ENCODE measurements at regions of chr10 and their contacts with region 1.

Region 1: DNA sequence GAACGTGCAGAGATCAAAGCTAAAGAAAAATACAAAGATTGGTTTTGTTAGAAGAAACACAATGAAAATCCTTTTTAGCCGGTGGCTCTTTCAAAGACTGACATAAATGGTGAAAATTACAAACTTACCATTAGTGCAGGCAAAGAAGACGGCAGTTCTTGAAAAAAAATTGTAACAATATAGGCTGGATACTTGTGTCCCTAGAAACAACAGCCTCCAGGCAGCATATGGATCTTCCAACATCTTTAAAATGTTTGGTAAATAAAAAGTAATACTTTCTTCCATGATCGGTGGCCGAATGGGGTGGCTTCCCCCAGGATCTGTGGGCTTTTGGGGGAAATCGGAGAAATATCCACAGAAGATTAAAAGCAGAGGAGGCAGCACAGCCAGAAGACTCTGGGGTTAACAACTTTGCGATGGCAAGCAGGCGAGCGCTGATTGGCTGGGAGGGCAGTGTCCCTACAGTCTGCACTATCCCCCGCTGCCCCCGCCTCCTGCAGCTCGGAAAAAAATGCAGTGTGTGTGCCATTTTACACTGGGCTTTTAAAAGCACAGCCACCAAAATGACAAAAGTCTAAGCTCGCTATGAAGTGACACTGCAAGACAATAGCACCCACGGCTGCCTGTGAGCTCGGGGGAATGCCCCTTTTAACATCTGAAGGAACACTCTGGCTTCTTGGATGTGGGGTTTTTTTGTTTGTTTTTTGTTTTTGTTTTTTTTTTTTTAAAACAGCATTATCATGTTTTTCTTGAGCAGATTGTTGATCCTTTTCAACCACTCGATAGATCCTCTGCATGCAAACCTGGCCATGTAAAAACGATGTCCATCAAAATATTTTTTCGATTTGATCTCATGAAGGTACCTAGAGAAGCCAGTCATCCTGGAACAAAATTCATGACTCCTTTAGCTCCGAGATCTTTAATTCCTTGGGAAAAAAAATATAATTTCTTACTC is 31.7 kb upstream of the EPC1 start:
- DNase-seq: peak; percentile 84
- ATAC-seq: peak; percentile 98
- H3K4me3 ChIP-seq: peak overlapping the region; percentile 64 to 94 (median 76)
- H3K27ac ChIP-seq: peak overlapping the region; percentile 79
- H3K4me1 ChIP-seq: peaks cover 38% of the 10 kb centered on the region
- H3K27me3 ChIP-seq: no peaks in the 10 kb centered on the region; a peak in 1 of 5 replicates
- CTCF ChIP-seq: 0 out of 2 replicates have a peak, but pooled peaks have one; percentile 8
- EP300 ChIP-seq: no peak
- POLR2A ChIP-seq: peak in 1 of 2 experiments; percentile 35; a peak in 2 of 4 replicates
- RAD21 ChIP-seq: no peak

Region 2: DNA sequence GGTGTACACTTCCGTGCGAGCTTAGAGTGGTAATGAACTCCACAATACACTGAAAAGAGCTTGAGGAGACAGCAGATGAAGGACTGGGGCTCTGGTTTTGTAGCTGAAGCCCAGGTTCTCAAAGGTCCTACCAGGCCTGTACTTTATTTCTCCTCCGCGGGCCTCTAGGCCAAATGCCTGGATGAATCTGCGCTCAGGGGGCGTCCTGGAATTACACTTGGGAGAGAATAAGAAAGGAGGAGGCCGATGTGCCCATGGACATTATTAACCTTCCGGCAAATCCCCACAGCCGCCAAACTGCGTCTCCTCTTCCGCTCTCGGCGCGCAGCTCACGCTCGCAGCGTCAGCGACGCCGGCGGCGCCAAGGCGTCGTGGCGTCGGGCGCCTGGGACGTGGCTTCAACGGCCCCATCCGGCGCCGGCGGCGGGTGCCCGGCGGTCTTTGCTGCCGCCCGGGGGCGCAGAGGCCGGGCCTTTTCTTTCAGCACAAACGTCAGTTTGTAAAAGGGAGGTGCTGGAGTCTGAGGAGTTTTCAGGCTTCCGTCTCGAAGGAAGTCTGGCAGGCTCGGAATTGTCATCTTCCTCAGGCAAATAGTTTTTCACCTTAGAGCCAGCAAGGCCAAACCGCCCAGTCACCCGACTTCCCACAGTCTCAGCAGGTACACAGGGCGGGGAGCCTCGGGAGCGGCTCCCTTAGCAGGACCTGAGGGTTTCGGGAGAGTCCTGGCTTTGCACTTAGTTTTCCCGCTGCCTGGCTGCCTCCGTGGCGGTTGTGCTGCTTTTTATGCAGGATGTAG is 67.3 kb after region 1 on chr10 and contains the start of gene CCDC7:
- CTCF ChIA-PET with region 1: no interaction called
- POLR2A ChIA-PET with region 1: no interaction called
- in situ Hi-C with region 1: no loop called
- intact Hi-C with region 1: loop called (anchors 5 kb)
- DNase-seq: peak; percentile 62
- ATAC-seq: peak; percentile 99
- H3K4me3 ChIP-seq: peak within 1 kb of the TSS; percentile 62 to 77 (median 76)
- H3K27ac ChIP-seq: peak within 1 kb of the TSS; percentile 49
- H3K4me1 ChIP-seq: peaks cover 10% of the 10 kb centered on the region
- H3K27me3 ChIP-seq: no peaks in the 10 kb centered on the region; a peak in 1 of 5 replicates
- CTCF ChIP-seq: peak; percentile 53
- EP300 ChIP-seq: no peak
- POLR2A ChIP-seq: peak; percentile 75 to 89
- RAD21 ChIP-seq: peak; percentile 52; the same call in 1 of the 2 replicates
- total RNA-seq, gene CCDC7: 0.93 and 1.8 TPM in 2 replicates

Region 3: DNA sequence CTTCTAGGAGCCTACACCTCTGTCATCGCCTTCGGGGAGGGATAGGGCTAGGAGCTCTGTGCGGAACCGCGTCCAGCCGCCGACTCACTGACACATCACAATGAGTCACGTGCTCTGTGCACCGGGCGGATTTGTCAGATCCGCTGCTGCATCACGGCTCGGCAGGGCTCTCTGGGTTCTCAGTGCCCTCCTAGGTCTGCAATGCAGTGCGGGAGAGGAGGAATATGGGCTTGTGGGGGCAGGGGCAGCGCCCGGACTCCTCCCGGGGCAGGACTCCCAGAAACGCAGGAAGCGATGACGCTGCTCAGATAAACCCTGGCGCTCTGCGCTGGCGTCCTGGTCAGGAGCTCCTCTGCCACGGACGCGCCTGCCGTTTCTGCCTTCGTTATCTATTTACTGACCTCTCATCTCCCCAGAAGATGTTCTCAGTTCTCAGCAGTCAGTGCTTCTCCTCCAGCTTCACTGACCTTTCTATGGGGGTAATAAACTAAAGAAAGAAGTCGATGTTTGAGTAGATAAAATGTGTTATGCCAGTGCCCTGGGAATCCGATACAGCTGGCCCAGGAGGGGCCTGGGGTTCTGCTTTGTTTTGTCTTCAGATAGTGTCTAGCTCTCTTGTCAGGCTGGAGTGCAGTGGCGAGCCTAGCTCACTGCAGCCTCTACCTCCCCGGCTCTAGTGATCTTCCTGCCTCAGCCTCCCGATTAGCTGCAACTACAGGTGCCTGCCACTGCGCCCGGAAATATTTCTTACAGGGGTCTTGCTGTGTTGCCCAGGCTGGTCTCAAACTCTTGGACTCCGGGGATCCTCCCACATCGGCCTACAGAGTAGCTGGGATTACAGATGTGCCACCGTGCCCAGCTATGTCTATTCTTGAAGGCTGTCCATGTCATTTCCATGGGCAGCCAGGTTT is 602.2 kb after region 1 on chr10:
- CTCF ChIA-PET with region 1: no interaction called
- POLR2A ChIA-PET with region 1: no interaction called
- in situ Hi-C with region 1: no loop called
- intact Hi-C with region 1: loop called (anchors 2 kb)
- DNase-seq: peak; percentile 87
- ATAC-seq: peak; percentile 92
- H3K4me3 ChIP-seq: peak overlapping the region; percentile 61 to 79 (median 67)
- H3K27ac ChIP-seq: peak overlapping the region; percentile 70
- H3K4me1 ChIP-seq: peaks cover 49% of the 10 kb centered on the region
- H3K27me3 ChIP-seq: no peaks in the 10 kb centered on the region; a peak in 1 of 5 replicates
- CTCF ChIP-seq: 0 out of 2 replicates have a peak, but pooled peaks have one; percentile 2
- EP300 ChIP-seq: no peak; a peak in 1 of 4 replicates
- POLR2A ChIP-seq: peak; percentile 72
- RAD21 ChIP-seq: peak; percentile 51

Measured in HepG2 (cell line).